BJ (cell line): ENCODE measurements at regions of chr10 and their contacts with region 1.

Region 1: DNA sequence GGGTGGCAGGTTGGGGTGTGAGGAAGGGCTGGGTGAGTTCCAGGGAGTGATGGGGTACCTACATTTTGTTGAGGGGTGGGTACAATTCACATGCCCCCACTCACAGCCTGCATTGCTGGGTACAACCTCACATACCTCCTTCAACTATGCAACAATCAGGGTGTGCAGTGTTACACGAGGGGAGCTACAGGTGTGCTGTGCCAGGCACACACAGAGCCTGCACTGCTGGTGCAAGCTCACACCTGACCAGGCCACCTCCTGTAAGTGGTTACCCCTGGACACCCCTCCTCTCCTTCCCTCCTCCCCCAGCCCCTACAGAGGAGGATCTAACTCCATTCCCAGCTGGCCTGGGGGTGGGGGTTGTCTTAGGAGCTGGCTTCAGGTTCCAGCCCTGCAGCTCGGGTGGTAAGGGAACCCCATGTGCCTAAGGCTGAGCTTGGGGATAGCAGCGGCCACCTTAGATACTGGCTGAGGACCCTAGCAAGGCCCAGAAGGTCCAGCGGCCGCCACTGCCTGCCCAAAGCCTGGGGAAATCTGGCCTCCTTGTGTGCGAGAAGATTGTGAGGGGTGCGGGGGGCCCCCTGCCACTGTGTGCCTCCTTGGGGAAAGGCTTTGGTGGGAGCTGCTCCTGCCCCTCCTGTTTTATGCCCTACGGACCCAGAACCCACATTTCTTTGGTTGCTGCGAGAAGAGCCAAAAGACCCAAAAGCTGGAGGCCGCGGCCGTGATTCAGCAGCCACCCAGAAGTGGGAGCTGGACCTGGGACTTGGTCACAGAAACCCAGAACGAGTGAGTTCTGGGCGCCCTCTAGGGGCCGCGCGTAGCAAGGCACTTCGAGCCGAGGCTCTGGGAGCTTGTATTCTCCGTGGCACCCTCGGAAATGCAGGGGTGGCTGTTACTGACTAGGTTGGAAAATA is 10.8 kb downstream of the TLX1 start:
- DNase-seq: peak; percentile 13
- H3K4me3 ChIP-seq: no peak overlapping the region
- H3K27me3 ChIP-seq: peaks cover 69% of the 10 kb centered on the region
- CTCF ChIP-seq: peak; percentile 99

Region 2: GRCh38 chr10:101018600-101019439 is 123.1 kb before region 1 on chr10:
- CTCF ChIA-PET with region 1: interaction called, 19 read pairs
- POLR2A ChIA-PET with region 1: no interaction called
- DNase-seq: no peak
- H3K4me3 ChIP-seq: no peak overlapping the region
- H3K27me3 ChIP-seq: no peaks in the 10 kb centered on the region; the same call in 1 of the 2 replicates
- CTCF ChIP-seq: peak; percentile 86

Region 3: GRCh38 chr10:101060036-101060950 is 81.6 kb before region 1 on chr10:
- CTCF ChIA-PET with region 1: interaction called, 70 read pairs
- POLR2A ChIA-PET with region 1: interaction called, 21 read pairs
- DNase-seq: no peak
- H3K4me3 ChIP-seq: peak overlapping the region; percentile 86
- H3K27me3 ChIP-seq: no peaks in the 10 kb centered on the region
- CTCF ChIP-seq: peak; percentile 87

Region 4: DNA sequence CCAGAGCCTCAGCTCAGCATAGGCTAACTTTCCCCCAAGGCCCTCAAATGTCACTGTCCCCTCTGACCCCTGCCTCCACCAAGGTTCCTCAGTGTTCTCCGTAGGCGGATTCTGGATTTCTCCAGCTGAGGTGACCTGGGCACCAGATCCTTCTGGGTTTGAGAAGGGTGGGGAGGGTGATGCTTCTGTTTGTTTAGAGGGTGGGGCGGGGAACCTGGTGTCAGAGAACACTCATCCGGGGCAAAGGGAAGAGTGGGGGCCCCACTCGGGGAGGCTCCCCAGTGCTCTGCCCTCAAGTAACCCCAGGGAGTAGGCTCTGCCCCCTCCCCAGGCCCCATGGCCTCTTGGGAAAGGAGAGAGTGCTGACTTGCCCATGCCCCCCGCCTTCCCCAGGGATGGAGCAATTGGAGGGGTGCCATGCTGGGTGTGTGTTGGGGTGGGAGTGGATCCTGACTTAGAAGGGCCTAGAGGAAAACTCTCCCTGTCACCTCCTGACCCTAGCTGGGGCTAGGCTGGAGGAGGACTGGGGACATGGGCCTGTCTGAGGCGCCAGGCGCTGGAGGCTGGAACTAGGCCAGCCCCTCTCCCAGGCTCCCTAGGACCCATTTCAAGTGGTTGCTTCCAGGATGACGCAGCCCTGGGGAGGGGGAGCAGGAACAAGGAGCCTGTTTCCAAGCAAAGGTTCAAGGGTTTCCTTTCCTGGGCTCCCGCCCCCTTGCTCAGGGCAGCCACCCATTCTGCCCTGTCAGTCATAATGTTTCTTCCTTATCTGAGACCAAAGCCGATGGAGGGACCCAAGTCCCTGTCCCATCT is 52.2 kb before region 1 on chr10:
- CTCF ChIA-PET with region 1: interaction called, 312 read pairs
- POLR2A ChIA-PET with region 1: no interaction called
- DNase-seq: no peak
- H3K4me3 ChIP-seq: no peak overlapping the region
- H3K27me3 ChIP-seq: peaks cover 45% of the 10 kb centered on the region
- CTCF ChIP-seq: no peak

Region 5: GRCh38 chr10:101120884-101121653 is 20.8 kb before region 1 on chr10:
- CTCF ChIA-PET with region 1: interaction called, 54 read pairs
- POLR2A ChIA-PET with region 1: no interaction called
- DNase-seq: no peak
- H3K4me3 ChIP-seq: peak overlapping the region; percentile 16
- H3K27me3 ChIP-seq: peaks cover 60% of the 10 kb centered on the region
- CTCF ChIP-seq: no peak

Region 6: DNA sequence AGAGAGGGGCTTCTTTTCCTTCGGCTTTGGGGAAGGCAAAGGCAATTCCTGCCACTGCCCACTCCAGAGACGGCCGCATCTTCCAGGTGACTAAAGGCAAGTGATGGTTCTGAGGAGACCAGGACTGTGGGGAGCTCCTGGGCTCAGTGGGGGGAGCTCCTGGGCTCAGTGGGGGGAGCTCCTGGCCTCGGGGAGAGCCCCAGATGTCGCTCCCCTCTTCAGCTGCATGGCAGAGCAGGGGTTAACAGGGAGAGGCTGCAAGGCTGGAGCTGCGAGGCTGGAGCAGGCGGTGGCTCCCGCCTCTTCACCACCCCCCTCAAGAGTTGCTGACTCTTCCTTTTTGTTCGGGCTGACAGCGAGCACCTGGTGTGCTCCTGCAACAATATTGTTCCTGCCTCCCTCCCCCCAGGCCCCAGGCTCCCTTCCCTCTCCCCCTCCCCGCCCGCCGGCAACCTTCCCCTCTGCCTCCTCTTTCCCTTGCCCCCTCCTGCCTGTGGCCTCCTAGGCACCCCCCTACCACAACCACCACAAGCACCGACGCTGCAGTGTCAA is 143.7 kb after region 1 on chr10:
- CTCF ChIA-PET with region 1: no interaction called
- POLR2A ChIA-PET with region 1: no interaction called
- DNase-seq: no peak
- H3K4me3 ChIP-seq: no peak overlapping the region
- H3K27me3 ChIP-seq: peaks cover 49% of the 10 kb centered on the region
- CTCF ChIP-seq: no peak

Region 7: DNA sequence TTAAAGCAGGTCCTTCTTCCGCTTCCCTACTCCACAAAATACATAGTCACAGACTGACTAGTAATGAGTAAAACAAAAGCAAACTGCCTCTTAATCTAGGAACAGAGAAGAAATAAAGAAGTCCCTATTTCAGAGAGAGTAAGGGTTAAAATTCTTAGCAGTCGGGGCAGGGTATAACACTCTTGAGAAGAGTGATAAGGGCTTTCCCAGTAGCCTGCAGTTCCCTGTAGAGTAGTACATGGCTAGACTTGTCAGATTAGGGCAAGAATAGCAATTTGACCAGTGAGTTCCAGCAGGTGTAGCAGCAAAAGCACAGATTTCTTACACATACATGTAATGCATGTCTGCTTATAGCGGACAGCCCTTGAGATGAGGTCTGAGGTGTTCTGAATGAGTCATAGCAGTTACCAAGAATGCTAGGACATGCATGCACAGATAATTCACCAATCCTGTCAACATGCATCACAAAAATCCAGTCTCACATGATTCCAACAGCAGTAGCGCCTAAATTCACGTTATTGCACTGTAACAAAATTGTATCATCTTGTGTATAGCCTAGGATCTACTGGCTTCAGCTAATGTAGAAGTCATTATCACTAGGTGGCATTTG is 252.8 kb after region 1 on chr10:
- CTCF ChIA-PET with region 1: no interaction called
- POLR2A ChIA-PET with region 1: no interaction called
- DNase-seq: no peak
- H3K4me3 ChIP-seq: no peak overlapping the region
- H3K27me3 ChIP-seq: no peaks in the 10 kb centered on the region
- CTCF ChIP-seq: no peak